ENCODE measurements at regions of chr3 and their contacts with region 1.

Region 1: GRCh38 chr3:122942937-122943827 is 84.4 kb downstream of the SEMA5B start:
- DNase-seq: peak; percentile 11
- H3K4me3 ChIP-seq: no peak overlapping the region
- H3K27ac ChIP-seq: no peak overlapping the region
- H3K27me3 ChIP-seq: peaks cover 44% of the 10 kb centered on the region
- CTCF ChIP-seq: peak; percentile 95

Region 2: GRCh38 chr3:122898298-122898697 is 44.9 kb before region 1 on chr3:
- CTCF ChIA-PET with region 1: no interaction called
- POLR2A ChIA-PET with region 1: no interaction called
- DNase-seq: no peak
- H3K4me3 ChIP-seq: no peak overlapping the region
- H3K27ac ChIP-seq: no peak overlapping the region
- H3K27me3 ChIP-seq: peaks cover 15% of the 10 kb centered on the region
- CTCF ChIP-seq: no peak

Region 3: DNA sequence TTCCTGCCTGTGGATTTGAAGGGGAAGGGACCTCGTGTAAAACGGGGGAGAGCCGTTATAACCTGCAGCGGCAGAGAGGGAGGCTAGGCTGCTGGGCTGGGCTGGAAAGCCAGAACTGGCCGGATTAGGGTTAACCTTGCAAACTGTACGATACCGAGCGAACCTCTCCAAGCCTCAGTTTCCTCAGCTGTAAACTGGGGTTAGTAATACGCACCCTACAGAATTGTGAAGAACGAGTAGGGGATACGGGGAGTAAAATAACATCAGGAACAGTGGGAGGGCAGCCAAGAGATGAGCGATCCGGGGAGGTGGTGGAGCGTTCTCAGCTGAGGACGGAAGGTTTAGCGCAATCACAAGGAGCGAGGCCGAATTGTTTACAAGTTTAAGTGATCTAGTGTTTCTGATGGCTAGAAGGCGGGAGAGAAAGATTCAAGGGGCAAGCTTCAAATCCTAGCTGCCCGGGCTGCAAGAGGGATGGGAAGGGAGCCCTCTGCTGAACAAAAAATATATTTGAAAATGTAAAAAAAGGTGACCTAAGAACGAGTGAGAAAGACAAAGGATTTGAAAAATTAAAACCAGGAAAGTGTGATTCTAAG is 85.1 kb after region 1 on chr3:
- CTCF ChIA-PET with region 1: interaction called, 51 read pairs
- POLR2A ChIA-PET with region 1: no interaction called
- DNase-seq: peak; percentile 52
- H3K4me3 ChIP-seq: peak overlapping the region; percentile 44
- H3K27ac ChIP-seq: no peak overlapping the region
- H3K27me3 ChIP-seq: peaks cover 82% of the 10 kb centered on the region
- CTCF ChIP-seq: peak; percentile 64

Region 4: GRCh38 chr3:123194552-123194951 is 251.4 kb after region 1 on chr3:
- CTCF ChIA-PET with region 1: interaction called, 12 read pairs
- POLR2A ChIA-PET with region 1: no interaction called
- DNase-seq: no peak
- H3K4me3 ChIP-seq: no peak overlapping the region
- H3K27ac ChIP-seq: no peak overlapping the region
- H3K27me3 ChIP-seq: no peaks in the 10 kb centered on the region
- CTCF ChIP-seq: peak; percentile 61

Measured in AG04450 (cell line).